PC-9 (cell line): ENCODE measurements at regions of chr6 and their contacts with region 1.

Region 1: DNA sequence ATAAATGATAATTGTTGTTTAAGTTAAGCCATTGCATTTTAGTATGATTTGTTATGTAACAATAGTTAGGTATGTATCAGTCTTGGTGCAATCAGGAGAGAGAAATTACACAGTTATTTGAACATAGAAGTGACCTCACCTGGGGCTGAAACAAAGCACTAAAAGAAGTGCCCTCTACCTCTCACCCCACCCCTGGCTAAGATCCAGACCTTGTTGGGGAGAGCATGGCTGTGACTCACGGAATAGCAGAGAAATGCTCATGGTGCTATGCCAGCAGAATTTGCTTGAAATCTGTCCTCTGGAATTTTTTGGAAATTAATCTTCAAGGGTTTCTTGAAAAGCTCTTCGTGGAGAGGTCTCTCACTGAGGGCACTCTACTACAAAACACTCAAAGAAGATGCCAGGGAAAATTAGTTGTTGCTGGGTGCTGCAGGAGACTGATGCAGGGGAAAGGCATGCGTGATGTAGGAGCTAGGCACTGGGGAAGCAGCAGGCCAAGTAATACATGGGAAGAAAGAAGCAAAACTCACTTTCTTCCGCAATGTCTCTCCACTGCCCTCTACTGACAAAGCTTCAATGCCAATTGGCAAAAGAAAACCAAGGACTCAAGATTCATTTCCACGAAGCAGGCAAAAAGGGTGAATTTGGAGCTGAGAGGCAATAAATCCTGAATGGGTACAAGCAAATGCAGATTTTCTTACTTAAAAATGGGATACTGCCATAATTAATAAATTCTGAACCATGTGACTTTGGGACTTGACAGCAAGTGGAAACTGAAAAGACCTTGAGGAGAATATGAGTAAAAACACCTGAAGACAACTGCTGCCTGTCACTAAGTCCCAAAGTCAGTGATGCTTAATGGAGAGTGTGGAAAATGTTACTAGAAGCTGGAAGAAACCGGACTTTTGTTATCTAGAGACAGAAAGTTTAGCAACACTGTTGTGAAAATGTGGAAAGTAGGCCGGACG is 136.3 kb upstream of the ZNF184 start:
- DNase-seq: peak; percentile 68 to 71
- H3K4me3 ChIP-seq: no peak overlapping the region
- H3K27ac ChIP-seq: no peak overlapping the region
- H3K4me1 ChIP-seq: 0 out of 2 replicates have a peak, but pooled peaks cover 8% of the 10 kb centered on the region
- H3K27me3 ChIP-seq: no peaks in the 10 kb centered on the region
- CTCF ChIP-seq: peak; percentile 77

Region 2: DNA sequence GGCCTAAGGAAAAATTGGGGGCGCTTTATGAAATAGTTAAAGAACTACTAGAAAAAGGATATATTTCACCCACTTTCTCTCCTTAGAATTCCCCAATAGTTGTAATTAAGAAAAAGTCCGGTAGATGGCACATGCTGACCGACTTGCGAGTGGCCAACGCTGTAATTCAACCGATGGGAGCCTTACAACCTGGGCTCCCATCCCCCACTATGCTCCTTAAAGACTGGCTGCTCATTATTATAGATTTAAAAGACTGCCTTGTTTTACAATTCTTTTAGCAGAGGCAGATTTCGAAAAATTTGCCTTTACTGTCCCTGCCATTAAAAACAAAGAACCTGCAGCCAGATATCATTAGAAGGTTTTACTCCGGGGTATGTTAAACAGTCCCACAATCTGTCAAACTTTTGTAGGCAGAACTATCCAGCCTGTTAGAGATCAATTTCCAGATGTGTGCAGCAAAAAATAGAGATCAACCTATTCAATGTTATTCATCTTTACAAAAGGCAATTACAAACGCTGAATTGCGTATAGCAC is 420.2 kb before region 1 on chr6:
- CTCF ChIA-PET with region 1: no interaction called
- POLR2A ChIA-PET with region 1: no interaction called
- intact Hi-C with region 1: loop called (anchors 5 kb)
- DNase-seq: peak; percentile 55 to 66
- H3K4me3 ChIP-seq: peak overlapping the region; percentile 87
- H3K27ac ChIP-seq: peak overlapping the region; percentile 57; the same call in 1 of the 2 replicates
- H3K4me1 ChIP-seq: peaks cover 12% of the 10 kb centered on the region
- H3K27me3 ChIP-seq: no peaks in the 10 kb centered on the region
- CTCF ChIP-seq: peak; percentile 88

Region 3: DNA sequence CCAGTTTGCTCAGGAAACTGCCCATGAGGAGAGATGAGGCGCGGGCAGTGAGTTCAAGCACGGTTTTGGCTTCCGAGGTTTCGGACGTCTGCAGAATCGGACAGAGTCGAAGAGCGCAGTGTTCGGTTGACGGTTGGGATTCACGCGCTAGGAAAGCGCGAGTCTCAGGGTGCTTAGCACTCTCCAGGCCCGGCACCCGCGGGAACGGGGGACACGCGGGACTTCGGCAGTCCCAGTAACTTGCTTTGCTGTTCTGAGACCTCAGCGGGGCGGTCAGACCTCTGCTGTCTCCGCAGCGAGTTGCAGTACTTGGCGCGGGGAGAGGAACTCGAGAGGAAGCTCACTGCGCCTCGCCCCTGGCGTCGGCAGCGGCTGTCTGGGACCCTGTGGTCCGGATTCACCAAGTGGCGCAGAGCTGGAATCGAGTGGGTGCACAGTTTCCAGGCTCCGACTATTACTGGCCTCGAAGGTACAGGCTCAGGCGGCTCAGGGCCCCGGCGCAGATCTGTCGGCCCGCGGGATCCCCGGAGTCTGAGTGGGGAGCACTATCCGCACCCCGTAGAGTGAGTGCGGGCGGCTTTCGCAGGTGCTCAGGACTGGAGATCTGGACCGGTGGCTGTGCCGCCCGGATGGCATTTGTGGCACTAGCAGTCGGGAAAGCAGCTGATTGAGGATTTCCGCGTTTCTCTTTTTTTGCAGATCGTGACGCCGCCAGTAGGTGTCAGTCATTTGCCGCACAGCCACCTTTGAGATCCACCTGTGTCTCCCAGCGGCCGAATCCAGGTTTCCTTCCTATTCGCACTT is 296.9 kb before region 1 on chr6 and contains the start of gene POM121L2:
- CTCF ChIA-PET with region 1: no interaction called
- POLR2A ChIA-PET with region 1: no interaction called
- intact Hi-C with region 1: loop called (anchors 1 kb)
- DNase-seq: peak; percentile 64 to 87
- H3K4me3 ChIP-seq: peak within 1 kb of the TSS; percentile 68
- H3K27ac ChIP-seq: no peak within 1 kb of the TSS
- H3K4me1 ChIP-seq: no peaks in the 10 kb centered on the region
- H3K27me3 ChIP-seq: 0 out of 2 replicates have a peak, but pooled peaks cover 3% of the 10 kb centered on the region
- CTCF ChIP-seq: peak; percentile 79
- total RNA-seq, gene POM121L2: 0.26 TPM in 1 of 2 replicates, not detected in the other

Region 4: GRCh38 chr6:27518881-27519795 is 90.1 kb before region 1 on chr6:
- CTCF ChIA-PET with region 1: interaction called, 10 read pairs
- POLR2A ChIA-PET with region 1: no interaction called
- intact Hi-C with region 1: loop called (anchors 1 kb)
- DNase-seq: peak; percentile 72 to 85
- H3K4me3 ChIP-seq: peak overlapping the region; percentile 87
- H3K27ac ChIP-seq: peak overlapping the region; percentile 50
- H3K4me1 ChIP-seq: peaks cover 19% of the 10 kb centered on the region
- H3K27me3 ChIP-seq: no peaks in the 10 kb centered on the region
- CTCF ChIP-seq: peak; percentile 86

Region 5: GRCh38 chr6:27753668-27754407 is 144.6 kb after region 1 on chr6:
- CTCF ChIA-PET with region 1: interaction called, 4 read pairs
- POLR2A ChIA-PET with region 1: no interaction called
- intact Hi-C with region 1: loop called (anchors 2 kb)
- DNase-seq: peak; percentile 66 to 81
- H3K4me3 ChIP-seq: peak overlapping the region; percentile 73
- H3K27ac ChIP-seq: no peak overlapping the region
- H3K4me1 ChIP-seq: peaks cover 8% of the 10 kb centered on the region; the same call in 1 of the 2 replicates
- H3K27me3 ChIP-seq: no peaks in the 10 kb centered on the region
- CTCF ChIP-seq: no peak

Region 6: GRCh38 chr6:28355743-28356665 is 746.8 kb after region 1 on chr6:
- CTCF ChIA-PET with region 1: interaction called, 11 read pairs
- POLR2A ChIA-PET with region 1: no interaction called
- intact Hi-C with region 1: no loop called
- DNase-seq: peak; percentile 75 to 80
- H3K4me3 ChIP-seq: peak overlapping the region; percentile 70
- H3K27ac ChIP-seq: peak overlapping the region; percentile 55
- H3K4me1 ChIP-seq: peaks cover 28% of the 10 kb centered on the region
- H3K27me3 ChIP-seq: no peaks in the 10 kb centered on the region
- CTCF ChIP-seq: peak; percentile 86